ENCODE measurements at regions of chr15 and their contacts with region 1.

Region 1: GRCh38 chr15:40274350-40275274 is 8.3 kb downstream of the ANKRD63 start:
- DNase-seq: peak; percentile 79 to 91 (median 82)
- ATAC-seq: peak; percentile 78
- H3K4me3 ChIP-seq: no peak overlapping the region
- H3K27ac ChIP-seq: no peak overlapping the region
- H3K4me1 ChIP-seq: peaks cover 13 to 38% of the 10 kb centered on the region in 2 experiments
- H3K27me3 ChIP-seq: peaks cover 0 to 16% of the 10 kb centered on the region in 2 experiments; a peak in 2 of 5 replicates
- CTCF ChIP-seq: peak; percentile 100
- EP300 ChIP-seq: 0 out of 2 replicates have a peak, but pooled peaks have one; percentile 13
- POLR2A ChIP-seq: no peak
- RAD21 ChIP-seq: peak; percentile 99 to 100

Region 2: DNA sequence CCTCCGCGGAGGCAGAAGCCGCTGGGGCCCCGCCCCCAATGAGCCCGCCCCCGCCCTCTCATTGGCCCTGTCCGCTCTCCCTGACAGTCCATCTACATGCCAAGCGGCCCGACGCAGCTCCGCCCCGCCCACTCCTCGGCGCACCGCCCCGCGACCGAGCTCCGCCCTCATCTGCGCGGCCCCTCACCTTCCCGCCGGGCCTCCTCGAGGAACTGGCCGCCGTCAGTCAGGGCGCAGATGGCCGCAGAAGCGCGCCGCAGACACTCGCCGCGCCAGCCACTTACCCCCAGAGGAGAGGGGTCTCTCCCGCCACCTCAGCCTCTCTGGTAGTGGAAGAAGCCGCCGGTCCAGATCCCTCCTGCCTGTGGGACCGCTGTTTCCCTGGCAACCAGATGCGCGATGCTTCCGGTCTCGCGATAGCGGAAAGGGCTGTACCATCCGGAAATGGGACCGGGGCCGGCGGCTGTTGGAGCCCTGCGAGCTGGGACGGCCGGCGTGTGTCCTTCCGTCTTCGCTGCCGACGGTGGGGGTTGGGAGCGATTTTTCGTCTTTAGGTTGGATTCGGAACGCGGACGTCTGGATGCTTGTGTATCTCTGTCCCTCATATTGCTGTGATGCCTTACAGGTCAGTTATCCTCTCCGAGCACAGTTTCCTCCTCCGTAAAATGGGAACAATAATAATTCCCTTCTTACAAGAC is 492.0 kb before region 1 on chr15 and contains the start of gene FSIP1:
- CTCF ChIA-PET with region 1: interaction called, 22 read pairs
- POLR2A ChIA-PET with region 1: no interaction called
- in situ Hi-C with region 1: no loop called
- intact Hi-C with region 1: loop called (anchors 5 kb)
- DNase-seq: peak; percentile 97 to 98 (median 98)
- ATAC-seq: peak; percentile 99
- H3K4me3 ChIP-seq: peak within 1 kb of the TSS; percentile 78
- H3K27ac ChIP-seq: peak within 1 kb of the TSS; percentile 74
- H3K4me1 ChIP-seq: peaks cover 0 to 8% of the 10 kb centered on the region in 2 experiments; a peak in 3 of 5 replicates
- H3K27me3 ChIP-seq: no peaks in the 10 kb centered on the region
- CTCF ChIP-seq: peak in 1 of 3 experiments; percentile 30; a peak in 1 of 6 replicates
- EP300 ChIP-seq: no peak
- POLR2A ChIP-seq: peak; percentile 76
- RAD21 ChIP-seq: no peak
- polyA plus RNA-seq, gene FSIP1: 0.07 to 0.20 TPM

Region 3: DNA sequence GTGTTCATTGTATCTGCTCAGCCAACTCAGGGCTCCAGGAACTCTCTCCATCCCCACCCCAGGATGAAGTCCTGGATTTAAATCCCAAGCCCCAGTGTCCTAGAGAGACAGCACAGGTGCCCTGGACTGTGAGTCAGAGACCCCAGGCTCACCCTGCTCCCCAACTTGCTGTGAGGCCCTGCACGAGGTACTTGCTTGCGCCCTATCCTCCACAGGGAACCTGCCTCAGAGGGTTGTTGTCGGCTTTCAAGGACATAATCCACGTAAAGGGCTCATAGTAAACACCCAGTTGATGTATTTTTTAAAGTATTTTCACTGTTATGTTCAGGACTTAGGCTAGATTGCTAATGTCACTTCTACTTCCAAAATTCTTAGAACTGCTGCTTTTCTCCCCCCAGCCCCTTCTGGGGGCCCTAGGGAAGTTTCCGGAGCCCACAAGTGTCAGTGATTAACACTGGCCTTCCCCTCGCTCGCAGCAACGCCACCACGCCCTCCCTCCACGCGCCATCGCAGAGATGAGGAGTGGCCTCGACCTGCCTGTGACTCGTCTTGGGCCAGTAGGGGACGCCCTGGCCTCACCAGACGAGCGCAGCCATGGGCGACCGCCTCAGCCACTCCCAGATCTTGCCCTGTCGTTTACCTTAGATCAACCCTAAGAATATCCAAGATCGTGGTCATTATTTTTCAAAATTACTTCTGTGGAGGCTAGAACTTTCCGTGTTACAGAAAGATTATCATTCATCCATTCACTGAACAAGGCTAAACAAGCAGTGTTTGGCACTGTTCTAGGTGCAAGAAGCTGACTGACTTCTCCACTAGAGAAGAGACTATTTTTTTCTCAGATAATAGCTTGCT is 229.7 kb before region 1 on chr15:
- CTCF ChIA-PET with region 1: interaction called, 56 read pairs
- POLR2A ChIA-PET with region 1: interaction called, 3 read pairs
- in situ Hi-C with region 1: loop called (anchors 5 kb)
- intact Hi-C with region 1: loop called (anchors 1 kb)
- DNase-seq: peak; percentile 87 to 92 (median 90)
- ATAC-seq: peak; percentile 99
- H3K4me3 ChIP-seq: no peak overlapping the region
- H3K27ac ChIP-seq: peak overlapping the region; percentile 32; the same call in 1 of the 3 replicates
- H3K4me1 ChIP-seq: peaks cover 18% of the 10 kb centered on the region in 2 experiments
- H3K27me3 ChIP-seq: no peaks in the 10 kb centered on the region
- CTCF ChIP-seq: peak; percentile 97 to 98 (median 97)
- EP300 ChIP-seq: no peak
- POLR2A ChIP-seq: no peak
- RAD21 ChIP-seq: peak; percentile 96 to 98

Region 4: DNA sequence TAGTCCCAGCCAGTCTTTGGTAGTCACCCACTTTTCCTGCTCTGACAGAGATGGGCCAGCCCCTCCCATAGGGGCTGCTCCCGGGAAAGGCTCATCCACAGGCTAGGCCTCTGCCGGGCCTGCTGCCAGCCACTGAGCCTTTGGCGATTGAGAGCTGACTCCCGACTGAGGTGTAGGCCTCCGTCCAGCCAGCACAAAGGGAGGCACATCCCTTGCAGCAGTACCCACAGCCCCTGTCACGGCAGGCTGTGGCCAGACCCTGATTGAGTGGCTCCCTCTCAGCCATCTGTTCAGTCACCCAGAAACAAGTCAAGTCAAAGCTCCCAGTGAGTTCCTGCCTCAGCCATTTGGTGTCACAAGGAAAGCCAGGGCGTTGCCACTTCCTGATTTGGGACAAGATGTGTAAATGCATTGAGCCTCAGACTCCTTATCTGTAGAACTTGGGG is 42.0 kb before region 1 on chr15:
- CTCF ChIA-PET with region 1: no interaction called
- POLR2A ChIA-PET with region 1: no interaction called
- in situ Hi-C with region 1: no loop called
- intact Hi-C with region 1: loop called (anchors 5 kb)
- DNase-seq: no peak
- ATAC-seq: no peak
- H3K4me3 ChIP-seq: no peak overlapping the region
- H3K27ac ChIP-seq: no peak overlapping the region
- H3K4me1 ChIP-seq: peaks cover 9 to 17% of the 10 kb centered on the region in 2 experiments
- H3K27me3 ChIP-seq: no peaks in the 10 kb centered on the region
- CTCF ChIP-seq: no peak
- EP300 ChIP-seq: no peak
- POLR2A ChIP-seq: no peak
- RAD21 ChIP-seq: no peak

Region 5: DNA sequence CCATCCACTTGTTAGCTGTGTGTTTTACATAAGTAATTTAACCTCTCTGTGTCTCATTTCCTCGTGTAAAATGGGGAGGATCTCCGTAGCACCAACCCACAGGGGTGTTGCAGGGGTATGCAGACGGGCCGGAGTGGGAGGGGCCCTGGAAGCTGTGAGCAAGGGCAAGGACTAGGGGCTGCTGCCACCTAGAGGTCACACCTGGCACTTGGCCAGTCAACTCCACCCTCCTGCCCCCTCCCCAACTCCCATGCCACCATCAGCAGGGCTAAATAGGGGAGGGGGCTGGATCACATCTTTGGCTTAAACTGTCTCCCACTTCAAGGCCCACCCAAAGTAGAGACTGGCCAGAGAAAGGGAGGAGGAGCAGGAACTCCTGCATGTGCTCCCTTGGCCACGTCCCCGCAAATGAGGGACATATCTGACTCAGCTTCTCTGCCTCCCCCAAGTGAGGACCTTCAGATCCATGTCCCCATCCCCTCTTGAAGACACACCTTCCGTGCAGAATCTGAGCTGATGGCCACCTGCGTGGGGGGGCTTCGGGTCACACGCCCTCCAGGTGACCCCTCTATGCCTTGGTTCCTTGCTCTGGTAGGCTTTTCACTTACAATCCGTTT is 63.5 kb after region 1 on chr15:
- CTCF ChIA-PET with region 1: interaction called, 11 read pairs
- POLR2A ChIA-PET with region 1: interaction called, 4 read pairs
- in situ Hi-C with region 1: no loop called
- intact Hi-C with region 1: loop called (anchors 1 kb)
- DNase-seq: peak; percentile 87 to 91 (median 91)
- ATAC-seq: peak; percentile 87
- H3K4me3 ChIP-seq: no peak overlapping the region
- H3K27ac ChIP-seq: no peak overlapping the region
- H3K4me1 ChIP-seq: peaks cover 22 to 63% of the 10 kb centered on the region in 2 experiments
- H3K27me3 ChIP-seq: no peaks in the 10 kb centered on the region
- CTCF ChIP-seq: peak; percentile 90 to 94 (median 93)
- EP300 ChIP-seq: no peak
- POLR2A ChIP-seq: no peak
- RAD21 ChIP-seq: peak; percentile 71 to 84

Region 6: GRCh38 chr15:40564591-40565332 is 290.1 kb after region 1 on chr15 and contains the start of gene CCDC32:
- CTCF ChIA-PET with region 1: no interaction called
- POLR2A ChIA-PET with region 1: no interaction called
- in situ Hi-C with region 1: no loop called
- intact Hi-C with region 1: no loop called
- DNase-seq: peak; percentile 95 to 99 (median 97)
- ATAC-seq: peak; percentile 95
- H3K4me3 ChIP-seq: peak within 1 kb of the TSS; percentile 70
- H3K27ac ChIP-seq: peak within 1 kb of the TSS; percentile 76
- H3K4me1 ChIP-seq: peaks cover 15 to 21% of the 10 kb centered on the region in 2 experiments; a peak in 4 of 5 replicates
- H3K27me3 ChIP-seq: no peaks in the 10 kb centered on the region
- CTCF ChIP-seq: no peak
- EP300 ChIP-seq: no peak
- POLR2A ChIP-seq: peak; percentile 89
- RAD21 ChIP-seq: no peak
- polyA plus RNA-seq, gene CCDC32: 54.4 to 94.8 TPM

Measured in K562 (cell line).